Activated CD8-positive, alpha-beta T cell treated with anti-CD3 and anti-CD28 coated beads for 36 hours (primary cell): ENCODE measurements at regions of chr12 and their contacts with region 1.

Region 1: GRCh38 chr12:3964439-3964838 is 91.2 kb upstream of the PARP11 start:
- DNase-seq: peak; percentile 50
- ATAC-seq: no peak
- H3K4me3 Mint-ChIP-seq: no peak overlapping the region
- H3K27ac Mint-ChIP-seq: no peak overlapping the region
- H3K4me1 Mint-ChIP-seq: peaks cover 20% of the 10 kb centered on the region
- H3K27me3 Mint-ChIP-seq: no peaks in the 10 kb centered on the region
- CTCF ChIP-seq: no peak

Region 2: DNA sequence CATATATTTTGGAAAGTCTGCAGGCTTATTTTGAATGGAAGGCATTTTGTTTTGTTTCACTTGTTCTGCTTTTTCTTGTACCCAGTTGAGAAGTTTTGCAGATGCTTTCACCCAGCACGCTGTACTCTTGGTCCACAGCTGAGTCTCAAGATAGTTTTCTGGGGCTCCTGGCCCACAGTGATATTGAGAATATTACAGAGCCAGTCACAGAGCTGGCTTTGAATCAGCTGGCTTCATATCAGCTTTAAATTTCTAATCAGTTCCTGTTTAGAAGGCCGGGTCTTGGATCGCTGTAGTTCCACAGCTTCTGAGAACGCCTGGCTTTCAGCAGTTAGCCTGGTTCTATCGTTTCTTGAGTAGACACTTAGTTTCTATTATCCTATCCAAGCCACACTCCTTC is 58.8 kb before region 1 on chr12:
- CTCF ChIA-PET with region 1: interaction called, 10 read pairs
- POLR2A ChIA-PET with region 1: no interaction called
- intact Hi-C with region 1: no loop called
- DNase-seq: peak; percentile 21
- ATAC-seq: peak; percentile 66
- H3K4me3 Mint-ChIP-seq: peak overlapping the region; percentile 73
- H3K27ac Mint-ChIP-seq: peak overlapping the region; percentile 82
- H3K4me1 Mint-ChIP-seq: peaks cover 26% of the 10 kb centered on the region
- H3K27me3 Mint-ChIP-seq: no peaks in the 10 kb centered on the region
- CTCF ChIP-seq: no peak

Region 3: DNA sequence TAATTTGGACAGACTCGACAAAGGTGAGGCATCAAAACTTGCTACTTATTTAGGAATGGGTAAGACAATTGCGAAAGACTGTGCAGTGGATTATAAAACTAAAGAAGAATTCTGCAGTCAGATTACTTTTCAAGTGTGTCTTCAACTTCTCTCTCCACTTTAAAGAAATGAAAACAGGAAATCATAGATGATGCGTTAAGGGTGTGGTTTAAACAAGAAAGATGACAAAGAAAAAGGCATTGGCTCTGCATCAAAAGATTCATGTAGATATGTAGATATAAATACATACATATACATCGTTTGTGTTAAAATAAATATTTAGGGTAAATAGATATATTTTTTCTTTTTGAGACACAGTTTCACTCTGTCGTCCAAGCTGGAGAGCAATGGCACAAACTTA is 16.7 kb before region 1 on chr12:
- CTCF ChIA-PET with region 1: interaction called, 12 read pairs
- POLR2A ChIA-PET with region 1: no interaction called
- intact Hi-C with region 1: no loop called
- DNase-seq: no peak
- ATAC-seq: peak; percentile 47
- H3K4me3 Mint-ChIP-seq: no peak overlapping the region
- H3K27ac Mint-ChIP-seq: peak overlapping the region; percentile 37
- H3K4me1 Mint-ChIP-seq: peaks cover 46% of the 10 kb centered on the region
- H3K27me3 Mint-ChIP-seq: no peaks in the 10 kb centered on the region
- CTCF ChIP-seq: no peak

Region 4: DNA sequence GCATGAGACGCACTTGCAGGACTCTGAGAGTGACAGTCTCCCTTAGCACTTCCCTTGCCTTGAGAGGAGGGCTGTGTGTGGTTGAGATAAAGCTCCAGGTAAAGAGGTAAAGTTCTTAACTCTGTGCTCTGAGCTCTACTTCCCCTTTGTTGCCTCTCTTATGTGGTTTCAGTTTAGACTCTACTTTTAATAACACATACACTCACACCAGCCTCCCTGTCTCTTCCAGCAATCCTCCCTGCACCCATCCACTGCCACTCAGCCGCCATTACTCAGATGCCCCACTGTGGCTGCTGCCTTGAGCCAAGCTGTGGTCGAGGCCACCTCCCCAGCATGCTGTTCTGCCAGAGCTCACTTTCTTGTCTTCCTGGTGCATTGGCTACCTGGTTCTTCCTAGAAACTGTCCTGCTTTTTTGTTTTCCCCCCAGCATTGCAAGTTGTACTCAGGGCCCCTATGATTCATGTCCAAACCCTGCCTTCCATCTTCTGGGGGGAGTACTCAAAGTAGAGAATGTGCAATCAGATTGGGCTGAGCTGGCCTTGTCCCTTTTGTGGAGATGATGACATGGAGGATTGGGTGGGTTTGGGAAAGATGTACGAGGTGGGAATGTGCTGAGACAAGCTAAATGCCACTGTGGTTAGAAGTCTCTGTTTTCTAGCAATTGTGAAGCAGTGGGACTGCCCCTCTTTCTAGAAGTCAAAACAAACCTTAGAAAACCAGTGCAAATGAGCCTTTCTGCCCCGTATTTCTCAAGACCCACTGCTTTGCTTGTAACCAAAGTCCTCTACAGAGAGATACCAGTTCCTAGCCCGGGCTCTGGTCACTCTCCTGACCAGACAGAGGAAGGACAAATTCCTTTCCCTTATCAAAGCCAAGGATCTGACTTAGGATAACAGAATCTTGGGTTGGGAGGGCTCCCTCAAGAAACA is 24.3 kb after region 1 on chr12:
- CTCF ChIA-PET with region 1: interaction called, 12 read pairs
- POLR2A ChIA-PET with region 1: interaction called, 8 read pairs
- intact Hi-C with region 1: no loop called
- DNase-seq: peak; percentile 67
- ATAC-seq: peak; percentile 78
- H3K4me3 Mint-ChIP-seq: peak overlapping the region; percentile 58
- H3K27ac Mint-ChIP-seq: peak overlapping the region; percentile 85
- H3K4me1 Mint-ChIP-seq: peaks cover 32% of the 10 kb centered on the region
- H3K27me3 Mint-ChIP-seq: no peaks in the 10 kb centered on the region
- CTCF ChIP-seq: no peak